Activated CD8-positive, alpha-beta memory T cell treated with anti-CD3 and anti-CD28 coated beads, Interleukin-2, amount 10 ng/mL, durations not matched to agents 7 days and 5 days (primary cell): ENCODE measurements at regions of chr4 and their contacts with region 1.

Region 1: GRCh38 chr4:152535903-152536544 is at the start of gene FBXW7:
- DNase-seq: peak; percentile 100
- ATAC-seq: peak; percentile 85
- H3K4me3 Mint-ChIP-seq: peak within 1 kb of the TSS; percentile 85
- H3K27ac Mint-ChIP-seq: peak within 1 kb of the TSS; percentile 98
- H3K4me1 Mint-ChIP-seq: peaks cover 52% of the 10 kb centered on the region
- H3K27me3 Mint-ChIP-seq: no peaks in the 10 kb centered on the region
- total RNA-seq, gene FBXW7: 49.3 to 62.9 TPM

Region 2: DNA sequence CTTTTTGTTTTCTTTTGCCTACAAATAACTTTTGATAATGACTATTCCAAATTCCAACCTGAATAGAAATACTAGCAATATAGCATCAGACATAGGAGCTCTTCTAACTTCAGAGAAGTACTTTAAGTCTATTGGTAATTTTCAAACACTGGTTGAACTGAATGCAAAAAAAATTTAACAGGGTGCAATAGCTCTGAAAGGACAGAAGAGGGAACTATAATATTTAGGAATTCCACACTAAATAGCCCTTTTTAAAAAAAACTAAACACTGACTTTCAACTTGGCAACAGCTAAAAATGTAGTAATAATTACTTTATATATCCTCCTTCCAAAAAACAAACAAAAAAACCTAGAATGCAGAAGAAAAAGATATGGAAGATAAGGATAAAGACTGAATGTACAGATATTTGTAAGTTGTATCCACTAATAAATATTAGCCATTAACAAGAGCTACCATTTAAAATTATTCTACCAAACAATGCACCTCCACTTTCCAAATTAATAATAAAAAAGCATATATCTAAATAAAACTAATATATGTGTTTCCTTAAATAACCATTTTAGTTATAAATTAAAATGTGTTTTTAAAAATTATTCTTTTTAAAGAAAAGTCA is 81.5 kb before region 1 on chr4:
- CTCF ChIA-PET with region 1: interaction called, 12 read pairs
- DNase-seq: no peak
- ATAC-seq: no peak
- H3K4me3 Mint-ChIP-seq: no peak overlapping the region
- H3K27ac Mint-ChIP-seq: no peak overlapping the region
- H3K4me1 Mint-ChIP-seq: peaks cover 37% of the 10 kb centered on the region
- H3K27me3 Mint-ChIP-seq: no peaks in the 10 kb centered on the region

Region 3: DNA sequence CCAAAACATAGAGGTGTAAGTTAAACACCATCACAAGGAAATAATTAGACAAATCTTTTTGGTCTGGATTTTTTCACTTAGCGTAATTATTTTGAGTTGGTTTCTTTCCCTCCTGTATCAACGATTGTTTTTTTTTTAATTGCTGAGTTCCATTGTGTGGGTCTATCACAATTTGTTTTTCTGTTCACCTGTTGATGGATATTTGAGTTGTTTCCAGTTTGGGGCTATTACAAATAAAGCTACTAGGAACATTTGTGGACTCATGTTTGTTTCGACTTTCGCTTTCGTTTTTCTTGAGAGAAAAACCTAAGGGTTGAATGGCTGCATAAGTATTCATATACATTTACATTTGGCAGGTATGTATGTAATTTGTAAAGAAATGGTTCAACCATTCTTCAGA is 20.3 kb after region 1 on chr4:
- CTCF ChIA-PET with region 1: interaction called, 54 read pairs
- DNase-seq: no peak
- ATAC-seq: peak; percentile 30
- H3K4me3 Mint-ChIP-seq: peak overlapping the region; percentile 66
- H3K27ac Mint-ChIP-seq: peak overlapping the region; percentile 89
- H3K4me1 Mint-ChIP-seq: peaks cover 50% of the 10 kb centered on the region
- H3K27me3 Mint-ChIP-seq: no peaks in the 10 kb centered on the region